ENCODE measurements at regions of chr6 and their contacts with region 1.

Region 1: DNA sequence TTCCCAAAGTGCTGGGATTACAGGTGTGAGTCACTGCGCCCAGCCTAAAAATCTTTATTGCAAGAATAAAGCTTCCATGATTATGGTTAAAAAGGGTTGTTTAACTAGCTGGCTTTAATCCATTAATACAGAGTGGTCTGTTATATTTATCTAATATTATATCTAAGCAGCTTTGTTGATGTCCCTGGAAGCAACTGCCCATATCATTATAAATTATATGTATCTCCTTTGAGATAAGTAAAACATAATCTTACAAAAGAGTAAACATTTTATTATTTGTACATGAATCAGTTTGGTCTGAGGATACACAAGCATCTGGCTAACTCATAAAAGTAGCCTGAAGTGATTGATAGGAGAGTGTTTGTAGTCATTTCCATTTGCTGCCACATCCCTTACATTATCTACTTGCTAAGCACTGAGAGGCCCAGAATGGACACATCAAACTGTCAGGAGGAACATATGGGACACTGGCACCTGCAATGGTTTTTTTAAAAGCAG is 46.9 kb downstream of the TRAF3IP2 start:
- DNase-seq: no peak
- H3K4me3 ChIP-seq: no peak overlapping the region
- H3K4me3 Mint-ChIP-seq: no peak overlapping the region
- H3K27ac Mint-ChIP-seq: no peak overlapping the region
- H3K4me1 ChIP-seq: peaks cover 4% of the 10 kb centered on the region; the same call in 1 of the 2 replicates
- H3K4me1 Mint-ChIP-seq: peaks cover 12% of the 10 kb centered on the region
- H3K27me3 ChIP-seq: no peaks in the 10 kb centered on the region
- H3K27me3 Mint-ChIP-seq: no peaks in the 10 kb centered on the region
- CTCF ChIP-seq: no peak

Region 2: DNA sequence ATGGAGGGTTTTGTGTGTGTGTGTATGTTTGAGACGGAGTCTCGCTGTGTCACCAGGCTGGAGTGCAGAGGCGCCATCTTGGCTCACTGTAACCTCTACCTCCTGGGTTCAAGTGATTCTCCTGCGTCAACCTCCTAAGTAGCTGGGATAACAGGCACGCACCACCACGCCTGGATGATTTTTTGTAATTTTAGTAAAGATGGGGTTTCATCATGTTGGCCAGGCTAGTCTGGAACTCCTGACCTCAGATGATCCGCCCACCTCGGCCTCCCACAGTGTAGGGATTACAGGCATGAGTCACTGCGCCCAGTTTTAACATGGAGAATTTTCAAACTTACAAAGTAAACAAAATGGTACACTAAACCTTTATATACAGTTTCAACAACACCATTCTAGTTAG is 661.3 kb before region 1 on chr6:
- CTCF ChIA-PET with region 1: no interaction called
- POLR2A ChIA-PET with region 1: no interaction called
- intact Hi-C with region 1: no loop called
- DNase-seq: no peak
- H3K4me3 ChIP-seq: no peak overlapping the region
- H3K4me3 Mint-ChIP-seq: no peak overlapping the region
- H3K27ac Mint-ChIP-seq: no peak overlapping the region
- H3K4me1 ChIP-seq: no peaks in the 10 kb centered on the region
- H3K4me1 Mint-ChIP-seq: no peaks in the 10 kb centered on the region
- H3K27me3 ChIP-seq: no peaks in the 10 kb centered on the region
- H3K27me3 Mint-ChIP-seq: no peaks in the 10 kb centered on the region
- CTCF ChIP-seq: no peak

Region 3: GRCh38 chr6:111462770-111463391 is 95.9 kb before region 1 on chr6:
- CTCF ChIA-PET with region 1: no interaction called
- POLR2A ChIA-PET with region 1: no interaction called
- intact Hi-C with region 1: no loop called
- DNase-seq: no peak
- H3K4me3 ChIP-seq: no peak overlapping the region
- H3K4me3 Mint-ChIP-seq: no peak overlapping the region
- H3K27ac Mint-ChIP-seq: no peak overlapping the region
- H3K4me1 ChIP-seq: peaks cover 26% of the 10 kb centered on the region
- H3K4me1 Mint-ChIP-seq: no peaks in the 10 kb centered on the region
- H3K27me3 ChIP-seq: no peaks in the 10 kb centered on the region
- H3K27me3 Mint-ChIP-seq: no peaks in the 10 kb centered on the region
- CTCF ChIP-seq: no peak

Region 4: DNA sequence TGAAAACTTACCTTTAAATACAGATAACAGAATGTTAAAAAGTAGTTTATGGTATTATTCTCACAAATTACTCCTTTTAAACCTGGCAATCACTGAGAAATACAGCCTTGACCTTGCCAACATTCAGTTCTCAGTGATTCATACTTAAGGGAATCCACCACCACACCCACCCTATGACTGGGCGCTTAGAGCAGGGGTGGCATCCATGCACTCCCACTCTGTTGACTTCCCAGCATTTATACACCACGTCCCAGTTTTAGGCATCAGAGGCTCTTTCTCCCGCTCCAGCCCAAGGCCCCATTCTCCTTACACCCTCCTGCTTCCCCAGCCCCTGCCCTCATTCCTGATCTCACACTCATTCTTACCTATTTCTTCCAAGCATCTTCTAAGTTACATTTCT is 30.6 kb after region 1 on chr6:
- CTCF ChIA-PET with region 1: no interaction called
- POLR2A ChIA-PET with region 1: no interaction called
- intact Hi-C with region 1: loop called (anchors 1 kb)
- DNase-seq: no peak
- H3K4me3 ChIP-seq: no peak overlapping the region
- H3K4me3 Mint-ChIP-seq: no peak overlapping the region
- H3K27ac Mint-ChIP-seq: peak overlapping the region; percentile 44
- H3K4me1 ChIP-seq: peaks cover 37% of the 10 kb centered on the region
- H3K4me1 Mint-ChIP-seq: peaks cover 42% of the 10 kb centered on the region
- H3K27me3 ChIP-seq: no peaks in the 10 kb centered on the region
- H3K27me3 Mint-ChIP-seq: no peaks in the 10 kb centered on the region
- CTCF ChIP-seq: no peak

Measured in Caco-2 (cell line).